Caco-2 (cell line): ENCODE measurements at regions of chr3 and their contacts with region 1.

Region 1: GRCh38 chr3:32296256-32297204 is 58.0 kb downstream of the CMTM8 start:
- DNase-seq: peak; percentile 53 to 62
- H3K4me3 ChIP-seq: no peak overlapping the region
- H3K4me3 Mint-ChIP-seq: no peak overlapping the region
- H3K27ac Mint-ChIP-seq: peak overlapping the region; percentile 33
- H3K4me1 ChIP-seq: peaks cover 47% of the 10 kb centered on the region
- H3K4me1 Mint-ChIP-seq: peaks cover 17% of the 10 kb centered on the region
- H3K27me3 ChIP-seq: no peaks in the 10 kb centered on the region
- H3K27me3 Mint-ChIP-seq: no peaks in the 10 kb centered on the region
- CTCF ChIP-seq: peak; percentile 78 to 82

Region 2: DNA sequence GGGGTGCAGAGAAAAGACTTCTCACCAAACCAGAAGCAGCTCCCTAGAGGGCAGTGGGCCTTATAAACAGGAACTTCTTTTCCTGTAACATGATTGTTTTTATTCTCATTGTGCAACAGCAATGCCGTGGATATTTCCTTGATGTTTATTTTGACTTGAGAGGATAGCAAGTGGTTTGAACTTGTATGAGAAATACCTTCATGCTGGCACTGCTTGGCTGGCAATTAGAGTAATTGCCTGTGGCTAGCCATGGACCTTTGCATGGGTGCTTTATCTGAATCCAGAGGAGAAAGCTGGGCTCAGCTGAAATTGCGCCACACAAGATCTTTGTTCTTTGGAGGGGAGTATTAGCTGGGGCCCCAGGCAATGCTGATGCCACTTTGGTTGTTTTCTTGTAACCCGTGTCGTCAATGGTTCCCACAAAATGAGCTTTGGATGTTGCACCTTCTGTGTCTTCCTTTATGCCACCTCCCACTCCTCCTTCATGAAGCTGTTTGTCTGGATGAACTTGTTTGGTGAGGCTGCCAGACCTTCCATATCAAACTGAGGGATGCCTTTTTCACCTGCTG is 20.2 kb before region 1 on chr3:
- CTCF ChIA-PET with region 1: interaction called, 9 read pairs
- POLR2A ChIA-PET with region 1: no interaction called
- intact Hi-C with region 1: loop called (anchors 2 kb)
- DNase-seq: peak in 1 of 2 experiments; percentile 65
- H3K4me3 ChIP-seq: no peak overlapping the region
- H3K4me3 Mint-ChIP-seq: no peak overlapping the region
- H3K27ac Mint-ChIP-seq: no peak overlapping the region
- H3K4me1 ChIP-seq: peaks cover 26% of the 10 kb centered on the region
- H3K4me1 Mint-ChIP-seq: peaks cover 22% of the 10 kb centered on the region
- H3K27me3 ChIP-seq: no peaks in the 10 kb centered on the region
- H3K27me3 Mint-ChIP-seq: no peaks in the 10 kb centered on the region
- CTCF ChIP-seq: no peak

Region 3: DNA sequence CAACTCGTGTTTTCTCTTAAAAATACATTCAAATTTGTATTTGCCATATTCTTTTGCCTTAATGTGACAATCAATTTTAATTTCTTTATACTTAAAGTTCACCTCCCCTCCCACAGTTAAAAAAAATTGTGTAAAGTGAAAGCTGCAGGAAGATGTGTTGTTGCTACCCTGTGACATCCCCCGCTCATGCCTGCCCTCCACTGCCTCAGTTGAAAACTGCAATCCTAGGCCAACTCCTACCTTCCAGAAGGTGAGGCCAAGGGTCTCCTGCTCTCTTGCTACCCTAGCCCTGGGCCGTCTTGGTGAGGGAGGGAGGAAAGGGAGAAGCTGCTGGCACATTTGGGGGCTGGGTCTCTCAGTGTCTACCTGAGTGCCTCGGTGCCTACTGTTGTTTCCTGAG is 38.1 kb after region 1 on chr3:
- CTCF ChIA-PET with region 1: no interaction called
- POLR2A ChIA-PET with region 1: no interaction called
- intact Hi-C with region 1: loop called (anchors 1 kb)
- DNase-seq: peak in 1 of 2 experiments; percentile 38
- H3K4me3 ChIP-seq: no peak overlapping the region
- H3K4me3 Mint-ChIP-seq: no peak overlapping the region
- H3K27ac Mint-ChIP-seq: no peak overlapping the region
- H3K4me1 ChIP-seq: peaks cover 2% of the 10 kb centered on the region
- H3K4me1 Mint-ChIP-seq: peaks cover 6% of the 10 kb centered on the region
- H3K27me3 ChIP-seq: no peaks in the 10 kb centered on the region
- H3K27me3 Mint-ChIP-seq: no peaks in the 10 kb centered on the region
- CTCF ChIP-seq: no peak

Region 4: DNA sequence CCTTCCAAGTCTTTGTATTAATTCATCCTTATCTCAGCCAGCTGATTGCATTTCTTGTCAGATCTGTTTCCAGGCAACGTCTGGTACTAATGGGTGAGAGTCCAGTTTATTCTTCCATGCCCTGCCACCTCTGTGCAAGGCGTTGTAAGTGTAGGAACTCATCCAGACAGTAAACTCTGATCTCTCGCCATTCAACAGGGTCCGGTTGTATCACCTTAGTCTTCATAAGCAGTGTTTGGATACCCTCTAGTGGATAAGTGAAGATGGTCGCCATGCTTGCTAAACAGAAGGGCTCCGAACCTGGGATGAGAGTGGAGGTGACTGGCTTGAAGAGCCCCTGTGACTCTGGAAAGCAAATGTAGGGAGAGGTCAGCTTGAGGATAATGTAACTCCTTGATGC is 43.5 kb after region 1 on chr3:
- CTCF ChIA-PET with region 1: no interaction called
- POLR2A ChIA-PET with region 1: no interaction called
- intact Hi-C with region 1: loop called (anchors 1 kb)
- DNase-seq: peak; percentile 67 to 68
- H3K4me3 ChIP-seq: no peak overlapping the region
- H3K4me3 Mint-ChIP-seq: no peak overlapping the region
- H3K27ac Mint-ChIP-seq: no peak overlapping the region
- H3K4me1 ChIP-seq: peaks cover 9% of the 10 kb centered on the region
- H3K4me1 Mint-ChIP-seq: peaks cover 6% of the 10 kb centered on the region
- H3K27me3 ChIP-seq: no peaks in the 10 kb centered on the region
- H3K27me3 Mint-ChIP-seq: no peaks in the 10 kb centered on the region
- CTCF ChIP-seq: peak; percentile 49 to 71

Region 5: DNA sequence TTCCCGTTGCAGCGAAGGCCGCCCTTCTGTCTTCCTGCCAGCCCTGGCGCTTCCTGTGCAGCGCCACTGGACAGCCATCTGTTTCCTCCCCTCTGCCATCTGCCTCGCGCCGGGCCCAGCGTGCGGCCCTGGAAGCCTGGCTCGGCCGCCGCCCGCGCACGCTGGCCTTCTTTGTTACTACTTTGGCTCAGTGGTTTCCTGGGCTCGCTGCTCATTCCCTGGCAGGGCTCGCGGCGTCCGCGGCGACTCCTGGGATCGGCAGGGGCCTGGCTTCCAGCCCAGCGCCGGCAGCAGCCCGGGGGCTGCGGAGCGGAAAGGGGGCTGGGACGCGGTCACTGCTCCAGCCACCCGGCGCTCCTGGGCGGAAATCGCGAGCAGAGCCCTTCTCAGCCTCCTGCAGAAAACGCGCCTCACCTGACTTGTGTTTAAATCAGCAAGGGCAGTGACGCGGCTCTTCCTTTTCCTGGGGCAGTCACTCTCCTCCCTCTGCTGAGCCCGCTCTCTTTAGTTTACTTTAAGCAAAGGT is 105.1 kb after region 1 on chr3:
- CTCF ChIA-PET with region 1: no interaction called
- POLR2A ChIA-PET with region 1: no interaction called
- intact Hi-C with region 1: loop called (anchors 5 kb)
- DNase-seq: peak; percentile 44 to 59
- H3K4me3 ChIP-seq: peak overlapping the region; percentile 33
- H3K4me3 Mint-ChIP-seq: peak overlapping the region; percentile 62
- H3K27ac Mint-ChIP-seq: peak overlapping the region; percentile 55
- H3K4me1 ChIP-seq: peaks cover 15% of the 10 kb centered on the region; the same call in 1 of the 2 replicates
- H3K4me1 Mint-ChIP-seq: peaks cover 25% of the 10 kb centered on the region
- H3K27me3 ChIP-seq: no peaks in the 10 kb centered on the region
- H3K27me3 Mint-ChIP-seq: no peaks in the 10 kb centered on the region
- CTCF ChIP-seq: no peak

Region 6: GRCh38 chr3:32603064-32603463 is 306.5 kb after region 1 on chr3:
- CTCF ChIA-PET with region 1: no interaction called
- POLR2A ChIA-PET with region 1: no interaction called
- intact Hi-C with region 1: no loop called
- DNase-seq: no peak
- H3K4me3 ChIP-seq: no peak overlapping the region
- H3K4me3 Mint-ChIP-seq: no peak overlapping the region
- H3K27ac Mint-ChIP-seq: no peak overlapping the region
- H3K4me1 ChIP-seq: no peaks in the 10 kb centered on the region
- H3K4me1 Mint-ChIP-seq: peaks cover 17% of the 10 kb centered on the region
- H3K27me3 ChIP-seq: no peaks in the 10 kb centered on the region
- H3K27me3 Mint-ChIP-seq: no peaks in the 10 kb centered on the region
- CTCF ChIP-seq: no peak